ENCODE measurements at regions of chr18 and their contacts with region 1.

Region 1: GRCh38 chr18:9905401-9905922 is 8.4 kb upstream of the VAPA start:
- H3K4me3 Mint-ChIP-seq: no peak overlapping the region
- H3K27ac Mint-ChIP-seq: no peak overlapping the region
- H3K4me1 Mint-ChIP-seq: peaks cover 35% of the 10 kb centered on the region
- H3K27me3 Mint-ChIP-seq: no peaks in the 10 kb centered on the region

Region 2: DNA sequence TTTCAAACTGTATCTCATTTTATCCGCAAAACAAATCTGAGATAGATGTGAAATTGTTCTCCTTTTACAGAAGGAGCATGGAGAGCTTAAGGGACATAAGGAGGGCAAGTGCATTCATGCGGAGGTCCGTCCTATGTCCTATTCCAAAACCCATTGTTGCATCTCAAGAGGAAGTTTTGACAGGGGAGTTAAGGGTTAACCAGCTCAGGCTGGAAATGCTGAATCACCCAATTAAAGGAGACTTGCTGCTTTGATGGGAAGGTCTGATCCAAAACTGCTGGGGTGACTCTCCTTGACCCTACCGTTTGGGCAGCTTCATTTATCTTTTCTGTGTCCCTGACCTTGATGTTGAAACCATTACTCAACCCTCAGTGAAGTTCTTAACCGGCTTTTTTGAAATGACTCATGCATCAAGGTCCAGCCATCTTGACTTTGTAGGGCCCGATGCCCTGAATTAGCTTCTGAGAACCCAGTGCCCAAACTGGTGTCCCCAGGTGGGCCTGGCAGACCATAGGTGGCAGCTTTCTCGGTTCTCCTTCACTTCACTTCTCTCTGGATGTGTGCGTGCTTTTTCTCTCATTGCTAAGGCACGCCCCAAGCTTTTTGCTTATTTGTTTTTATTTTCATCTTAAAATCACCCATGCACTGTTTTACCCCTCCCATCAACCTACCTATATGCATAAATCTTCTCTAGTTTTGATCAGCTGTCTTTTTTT is 35.6 kb before region 1 on chr18:
- intact Hi-C with region 1: loop called (anchors 5 kb)
- H3K4me3 Mint-ChIP-seq: no peak overlapping the region
- H3K27ac Mint-ChIP-seq: peak overlapping the region; percentile 66
- H3K4me1 Mint-ChIP-seq: peaks cover 56% of the 10 kb centered on the region
- H3K27me3 Mint-ChIP-seq: no peaks in the 10 kb centered on the region